ENCODE measurements at regions of chr17 and their contacts with region 1.

Region 1: GRCh38 chr17:45051060-45051719 is at the start of gene DCAKD:
- DNase-seq: peak; percentile 99
- H3K4me3 ChIP-seq: peak within 1 kb of the TSS; percentile 76
- H3K27ac ChIP-seq: peak within 1 kb of the TSS; percentile 90
- H3K4me1 ChIP-seq: peaks cover 26% of the 10 kb centered on the region
- H3K27me3 ChIP-seq: no peaks in the 10 kb centered on the region
- total RNA-seq, gene DCAKD: 37.1 and 45.8 TPM in 2 replicates

Region 2: DNA sequence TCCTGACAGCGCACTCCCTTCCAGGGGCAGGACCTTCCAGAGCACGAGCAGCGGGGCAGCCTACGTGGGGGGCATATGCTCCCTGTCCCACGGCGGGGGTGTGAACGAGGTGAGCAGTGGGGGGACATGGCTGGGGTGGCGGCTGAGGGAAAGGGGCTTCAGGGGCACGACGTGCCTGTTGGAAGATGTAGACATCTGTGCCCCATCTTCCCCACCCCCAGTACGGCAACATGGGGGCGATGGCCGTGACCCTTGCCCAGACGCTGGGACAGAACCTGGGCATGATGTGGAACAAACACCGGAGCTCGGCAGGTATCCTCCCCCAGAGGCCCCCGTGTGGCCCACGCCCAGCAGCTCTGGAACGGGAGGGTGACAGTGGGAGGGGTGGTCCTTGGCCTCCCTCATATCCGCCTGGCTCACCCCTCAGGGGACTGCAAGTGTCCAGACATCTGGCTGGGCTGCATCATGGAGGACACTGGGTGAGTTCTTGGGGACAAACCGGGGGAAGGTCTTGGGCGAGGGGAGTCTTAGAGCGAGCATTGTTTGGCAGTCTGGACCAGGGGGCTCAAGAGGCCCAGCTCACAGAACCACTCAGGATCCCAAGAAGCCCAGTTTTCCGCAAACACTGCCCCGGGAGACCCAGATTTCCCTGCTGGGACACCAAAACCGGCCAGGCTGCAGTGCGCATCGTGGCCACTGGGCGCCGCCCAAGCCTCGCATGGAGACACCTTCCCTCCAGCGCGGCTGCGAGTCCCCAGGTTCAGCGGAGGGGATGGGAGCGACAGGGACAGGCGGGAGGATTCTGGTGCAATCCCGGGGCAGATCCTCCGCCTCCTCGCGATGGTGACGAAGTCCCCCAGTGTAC is 276.7 kb before region 1 on chr17:
- in situ Hi-C with region 1: loop called (anchors 25 kb)
- DNase-seq: peak; percentile 92
- H3K4me3 ChIP-seq: peak overlapping the region; percentile 72
- H3K27ac ChIP-seq: no peak overlapping the region
- H3K4me1 ChIP-seq: no peaks in the 10 kb centered on the region
- H3K27me3 ChIP-seq: no peaks in the 10 kb centered on the region

Region 3: GRCh38 chr17:45123930-45124796 is 73.0 kb after region 1 on chr17:
- in situ Hi-C with region 1: loop called (anchors 10 kb)
- DNase-seq: peak; percentile 94
- H3K4me3 ChIP-seq: no peak overlapping the region
- H3K27ac ChIP-seq: peak overlapping the region; percentile 57
- H3K4me1 ChIP-seq: peaks cover 43% of the 10 kb centered on the region
- H3K27me3 ChIP-seq: no peaks in the 10 kb centered on the region